ENCODE measurements at regions of chr11 and their contacts with region 1.

Region 1: DNA sequence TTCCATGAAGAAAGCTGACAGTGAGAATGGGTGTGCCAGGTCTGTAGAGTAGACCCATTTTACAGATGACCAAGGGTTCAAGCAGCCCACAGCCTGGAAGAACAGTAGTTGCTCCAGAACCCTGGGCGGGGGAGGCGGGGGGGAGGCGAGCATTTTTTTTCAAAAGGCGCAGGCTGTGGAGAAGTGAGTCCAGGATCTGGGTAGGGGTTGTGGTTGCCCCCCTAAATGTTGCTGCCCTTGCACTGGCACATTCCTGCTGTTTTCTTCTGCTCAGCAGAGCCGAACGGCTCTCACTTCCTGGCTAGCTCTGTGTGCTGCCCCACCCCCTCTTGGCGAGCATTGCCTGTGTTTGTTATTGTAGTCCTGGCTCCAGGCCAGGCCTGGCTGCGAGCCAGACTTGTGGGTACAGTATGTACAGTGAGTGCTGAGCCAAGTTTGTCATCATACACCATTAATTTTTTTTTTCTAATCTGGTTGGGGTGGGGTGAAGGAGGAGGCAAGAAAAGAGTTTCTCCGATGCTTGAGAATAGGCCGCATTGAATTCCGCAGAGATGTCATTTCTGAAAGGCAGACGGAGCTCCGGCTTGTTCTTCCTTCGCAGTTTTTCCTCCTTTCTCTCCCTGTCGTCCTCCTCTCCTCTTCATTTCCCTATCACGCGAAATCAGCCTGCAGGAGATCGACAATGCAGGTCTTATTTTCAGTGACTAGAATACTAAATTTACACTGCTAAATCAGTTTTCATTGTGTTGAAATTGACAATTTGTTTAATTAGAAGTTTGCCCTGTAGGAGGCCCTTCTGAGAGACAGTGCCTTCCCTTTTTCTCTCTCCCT is 100.5 kb downstream of the ZBTB16 start:
- DNase-seq: peak; percentile 95 to 98 (median 97)
- H3K4me3 ChIP-seq: peak overlapping the region in 3 of 7 experiments; percentile 44 to 68 (median 51)
- H3K27ac ChIP-seq: peak overlapping the region in 1 of 2 experiments; percentile 31
- H3K4me1 ChIP-seq: peaks cover 6 to 53% (median 40%) of the 10 kb centered on the region in 4 experiments
- H3K27me3 ChIP-seq: peaks cover 0 to 3% (median 0%) of the 10 kb centered on the region in 5 experiments

Region 2: GRCh38 chr11:114148013-114148382 is 12.0 kb before region 1 on chr11:
- CTCF ChIA-PET with region 1: interaction called, 11 read pairs
- POLR2A ChIA-PET with region 1: interaction called, 3 read pairs
- DNase-seq: peak; percentile 56 to 94 (median 82)
- H3K4me3 ChIP-seq: no peak overlapping the region
- H3K27ac ChIP-seq: peak overlapping the region in 1 of 2 experiments; percentile 2
- H3K4me1 ChIP-seq: peaks cover 0 to 17% (median 8%) of the 10 kb centered on the region in 4 experiments
- H3K27me3 ChIP-seq: no peaks in the 10 kb centered on the region

Region 3: GRCh38 chr11:114174712-114175495 is 14.9 kb after region 1 on chr11:
- CTCF ChIA-PET with region 1: interaction called, 114 read pairs
- POLR2A ChIA-PET with region 1: interaction called, 3 read pairs
- DNase-seq: no peak
- H3K4me3 ChIP-seq: no peak overlapping the region
- H3K27ac ChIP-seq: no peak overlapping the region
- H3K4me1 ChIP-seq: peaks cover 11 to 46% (median 32%) of the 10 kb centered on the region in 4 experiments
- H3K27me3 ChIP-seq: no peaks in the 10 kb centered on the region

Region 4: GRCh38 chr11:114228435-114229411 is 68.7 kb after region 1 on chr11:
- CTCF ChIA-PET with region 1: no interaction called
- POLR2A ChIA-PET with region 1: no interaction called
- DNase-seq: no peak
- H3K4me3 ChIP-seq: no peak overlapping the region
- H3K27ac ChIP-seq: no peak overlapping the region
- H3K4me1 ChIP-seq: peaks cover 0 to 11% (median 4%) of the 10 kb centered on the region in 4 experiments
- H3K27me3 ChIP-seq: no peaks in the 10 kb centered on the region

Measured in common myeloid progenitor, CD34-positive (primary cell).